Dorsolateral prefrontal cortex (tissue), 120 donors: ENCODE measurements at regions of chr2 and their contacts with region 1.

Region 1: DNA sequence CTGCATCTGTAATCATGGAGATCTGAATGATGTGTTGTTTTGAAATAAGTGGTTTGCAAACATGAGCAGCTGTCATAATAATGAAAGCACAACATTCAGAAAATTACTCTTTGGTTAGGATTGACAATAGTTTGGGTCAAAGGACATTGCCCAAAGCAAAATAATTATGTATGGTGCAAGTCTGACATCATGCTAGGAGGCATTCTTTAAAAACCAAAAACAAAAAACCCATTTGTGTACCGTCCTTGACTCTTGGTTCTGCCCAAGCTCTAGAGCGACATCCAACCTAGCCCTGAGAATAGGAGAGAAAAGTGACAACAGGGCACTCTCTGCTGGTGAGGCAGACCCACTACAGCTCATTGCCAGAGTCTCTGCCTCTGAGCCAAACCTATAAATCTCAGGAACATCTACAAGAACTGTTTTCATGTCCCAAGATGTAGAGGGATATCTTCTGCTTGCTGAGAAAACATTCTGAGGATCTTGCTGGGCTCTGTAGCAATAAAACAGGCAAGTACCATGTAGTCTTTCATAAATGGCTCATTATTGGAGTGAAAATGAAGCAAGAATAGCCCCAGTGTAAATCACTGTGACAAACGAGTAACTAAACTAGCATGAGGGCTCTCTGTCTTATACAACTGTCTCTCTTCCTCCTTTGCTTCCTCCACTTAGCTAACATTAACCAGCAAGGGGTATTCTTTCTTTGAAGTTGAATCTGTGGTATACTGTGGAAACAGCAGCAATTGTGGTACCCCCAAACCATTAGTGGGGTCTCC is 266.8 kb upstream of the CXCR4 start:
- DNase-seq: peak in 3 of 10 donors; percentile 17 to 47 (median 42)
- H3K4me3 ChIP-seq: peak overlapping the region in 1 of 59 donors; percentile 9
- H3K27ac ChIP-seq: peak overlapping the region in 2 of 59 donors; percentile 12 to 53
- H3K27me3 ChIP-seq: no peaks in the 10 kb centered on the region
- CTCF ChIP-seq: peak; percentile 33 to 81 (median 65)

Region 2: DNA sequence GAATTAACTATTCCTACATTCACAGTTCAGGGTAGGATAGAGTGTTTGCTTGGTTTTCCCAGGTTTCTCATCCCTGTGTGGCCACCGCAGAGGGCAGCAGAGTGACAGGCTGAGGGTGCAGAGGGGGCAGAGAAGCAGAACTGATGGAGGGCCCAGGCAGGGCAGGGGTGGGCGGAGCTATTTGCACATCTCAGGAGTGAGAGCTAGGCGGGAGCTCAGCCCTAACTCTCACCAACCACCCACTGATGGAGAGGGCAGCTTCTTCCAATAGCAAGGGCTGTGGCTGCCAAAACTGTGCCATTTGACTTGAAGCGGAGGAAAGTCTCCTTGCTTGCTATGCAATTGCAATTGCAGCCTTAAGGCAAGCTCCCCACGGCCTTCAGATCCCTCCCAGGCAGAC is 387.3 kb before region 1 on chr2:
- intact Hi-C with region 1: loop called (anchors 10 kb)
- DNase-seq: peak in 7 of 10 donors; percentile 34 to 54 (median 49)
- H3K4me3 ChIP-seq: no peak overlapping the region
- H3K27ac ChIP-seq: peak overlapping the region in 3 of 59 donors; percentile 8 to 40 (median 19)
- H3K27me3 ChIP-seq: no peaks in the 10 kb centered on the region
- CTCF ChIP-seq: peak in 39 of 56 donors; percentile 10 to 55 (median 34)